Psoas muscle (tissue), 8 donors: ENCODE measurements at regions of chr2 and their contacts with region 1.

Region 1: GRCh38 chr2:17470855-17471641 is 47.2 kb downstream of the RAD51AP2 start:
- DNase-seq: no peak
- ATAC-seq: peak in 3 of 4 donors; percentile 46 to 66 (median 46)
- H3K4me3 ChIP-seq: no peak overlapping the region
- H3K27ac ChIP-seq: no peak overlapping the region
- H3K4me1 ChIP-seq: no peaks in the 10 kb centered on the region
- H3K27me3 ChIP-seq: no peaks in the 10 kb centered on the region
- CTCF ChIP-seq: peak; percentile 44

Region 2: DNA sequence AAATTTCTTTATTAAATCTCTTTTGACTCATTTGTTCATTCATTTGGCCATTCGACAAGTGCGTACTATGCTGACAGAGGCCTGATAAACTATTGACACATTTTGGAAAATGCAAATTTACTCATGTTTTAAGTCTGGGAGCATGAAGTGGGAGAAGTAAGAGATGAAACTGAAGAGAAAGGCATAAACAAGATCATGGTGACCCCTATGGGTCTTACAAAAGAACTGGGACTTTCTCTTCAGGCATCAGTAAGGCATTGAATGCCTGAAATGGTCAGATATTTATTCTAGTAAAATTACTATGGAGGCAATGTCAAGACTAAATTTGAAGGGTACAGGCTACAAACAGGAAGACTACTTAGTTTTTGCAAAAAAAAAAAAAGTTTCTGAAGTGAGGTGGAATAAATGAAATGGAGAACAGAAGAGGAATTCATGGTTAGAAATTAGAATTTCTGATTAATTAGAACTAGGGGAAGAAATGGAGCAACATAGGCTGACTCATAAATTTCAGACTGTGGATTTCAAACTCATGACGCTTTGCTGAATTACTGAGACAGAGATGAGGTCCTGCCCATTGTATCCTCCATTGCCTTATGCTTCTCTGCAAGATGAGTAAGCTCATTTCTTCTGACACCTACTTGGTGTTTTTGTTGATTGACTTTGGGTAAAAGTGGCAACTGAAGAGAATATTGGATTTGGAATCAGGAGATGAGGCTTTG is 102.2 kb after region 1 on chr2:
- intact Hi-C with region 1: loop called in 1 of 2 experiments (anchors 5 kb)
- DNase-seq: no peak
- ATAC-seq: peak in 1 of 4 donors; percentile 57
- H3K4me3 ChIP-seq: no peak overlapping the region
- H3K27ac ChIP-seq: no peak overlapping the region
- H3K4me1 ChIP-seq: no peaks in the 10 kb centered on the region
- H3K27me3 ChIP-seq: peaks cover 0 to 3% (median 0%) of the 10 kb centered on the region in 3 donors
- CTCF ChIP-seq: peak; percentile 36

Region 3: GRCh38 chr2:17646081-17646554 is 175.1 kb after region 1 on chr2:
- intact Hi-C with region 1: loop called in 1 of 2 experiments (anchors 10 kb)
- DNase-seq: no peak
- ATAC-seq: peak; percentile 89 to 94 (median 91)
- H3K4me3 ChIP-seq: no peak overlapping the region
- H3K27ac ChIP-seq: peak overlapping the region; percentile 60
- H3K4me1 ChIP-seq: peaks cover 15% of the 10 kb centered on the region
- H3K27me3 ChIP-seq: no peaks in the 10 kb centered on the region
- CTCF ChIP-seq: peak; percentile 86

Region 4: DNA sequence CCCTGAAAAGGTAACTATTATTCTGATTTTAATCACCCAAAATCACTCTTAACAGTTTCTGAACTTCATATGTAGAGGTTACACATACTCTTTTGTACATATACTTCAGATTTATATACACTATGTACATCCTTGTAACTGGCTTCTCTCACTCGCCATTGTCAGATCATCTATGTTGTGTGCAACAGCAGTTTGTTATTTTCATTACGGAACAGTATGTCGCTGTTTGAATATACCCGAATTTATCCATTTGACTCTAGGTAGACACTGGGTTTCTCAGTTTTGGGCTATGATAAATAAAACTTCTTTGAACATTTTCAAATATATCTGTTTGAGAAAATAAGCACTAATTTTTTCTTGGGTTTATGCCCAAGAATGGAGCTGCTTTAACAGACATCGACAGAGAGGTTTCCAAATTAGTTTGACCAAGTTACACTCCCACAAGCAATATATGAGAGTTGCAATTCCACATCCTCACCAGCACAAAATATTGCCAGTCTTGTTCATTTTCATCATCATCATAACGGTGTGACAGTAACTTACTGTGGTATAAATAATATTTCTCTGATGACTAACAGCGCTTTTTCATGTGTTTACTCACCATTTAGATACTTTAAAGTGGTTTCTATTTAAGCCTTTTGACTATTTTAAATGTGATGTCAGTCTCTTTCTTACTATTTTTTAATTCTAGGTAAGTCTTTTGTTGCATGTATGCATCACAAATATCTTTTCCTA is 201.7 kb after region 1 on chr2:
- intact Hi-C with region 1: loop called (anchors 2 to 5 kb)
- DNase-seq: no peak
- ATAC-seq: no peak
- H3K4me3 ChIP-seq: no peak overlapping the region
- H3K27ac ChIP-seq: no peak overlapping the region
- H3K4me1 ChIP-seq: no peaks in the 10 kb centered on the region
- H3K27me3 ChIP-seq: no peaks in the 10 kb centered on the region
- CTCF ChIP-seq: no peak